Activated CD4-positive, alpha-beta T cell treated with anti-CD3 and anti-CD28 coated beads, Interleukin-2, amount 10 ng/mL, durations not matched to agents 24 days and 14 days (primary cell): ENCODE measurements at regions of chr1 and their contacts with region 1.

Region 1: DNA sequence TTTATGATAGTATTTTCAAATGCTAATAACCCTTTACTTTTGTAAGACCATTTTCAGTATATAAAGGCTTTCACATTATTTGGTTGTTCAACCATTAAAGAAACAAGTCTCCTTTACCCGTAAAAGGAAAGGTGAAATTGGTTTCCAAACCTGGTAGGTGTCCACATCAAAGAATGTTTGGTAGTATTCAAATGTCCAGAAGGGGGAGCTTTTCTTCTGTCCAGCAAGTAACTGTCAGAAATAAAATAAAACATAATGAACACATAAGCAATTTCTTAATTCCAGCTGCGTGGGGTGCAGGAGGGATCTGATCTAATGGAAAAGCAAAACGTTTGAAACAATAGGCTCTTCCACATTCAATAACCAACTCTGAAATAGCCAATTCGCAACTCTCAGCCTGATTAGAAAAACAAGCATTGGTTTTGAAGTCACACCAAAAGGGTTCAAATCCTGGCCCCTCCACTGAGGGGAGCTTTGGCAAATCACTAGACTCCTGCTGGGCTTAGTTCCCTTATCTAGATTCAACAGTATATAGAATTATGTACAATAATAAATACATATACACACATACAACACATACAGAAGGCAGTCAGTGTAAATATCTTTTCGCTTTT is 11.0 kb downstream of the YIPF1 start:
- DNase-seq: peak; percentile 62
- H3K4me3 Mint-ChIP-seq: no peak overlapping the region
- H3K27ac Mint-ChIP-seq: no peak overlapping the region
- H3K4me1 Mint-ChIP-seq: peaks cover 3% of the 10 kb centered on the region
- H3K27me3 Mint-ChIP-seq: no peaks in the 10 kb centered on the region

Region 2: DNA sequence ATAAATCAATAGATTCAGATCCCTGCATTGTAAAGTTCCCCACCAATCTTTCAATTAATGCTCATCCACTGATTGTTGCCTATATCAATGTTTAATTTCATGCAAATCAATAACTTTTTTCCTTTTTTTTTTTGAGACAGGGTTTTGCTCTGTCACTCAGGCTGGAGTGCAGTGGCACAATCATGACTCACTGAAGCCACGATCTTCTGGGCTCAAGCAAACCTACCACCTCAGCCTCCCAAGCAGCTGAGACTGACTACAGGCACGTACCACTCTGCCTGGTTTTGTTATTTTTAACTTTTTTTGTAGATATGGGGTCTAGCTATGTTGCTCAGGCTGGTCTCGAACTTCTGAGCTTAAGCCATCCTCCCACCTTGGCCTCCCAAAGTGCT is 41.1 kb after region 1 on chr1:
- intact Hi-C with region 1: loop called (anchors 5 kb)
- DNase-seq: no peak
- H3K4me3 Mint-ChIP-seq: no peak overlapping the region
- H3K27ac Mint-ChIP-seq: peak overlapping the region; percentile 84
- H3K4me1 Mint-ChIP-seq: peaks cover 36% of the 10 kb centered on the region
- H3K27me3 Mint-ChIP-seq: no peaks in the 10 kb centered on the region

Region 3: GRCh38 chr1:53959664-53960250 is 81.2 kb after region 1 on chr1:
- intact Hi-C with region 1: loop called (anchors 1 kb)
- DNase-seq: peak; percentile 80
- H3K4me3 Mint-ChIP-seq: no peak overlapping the region
- H3K27ac Mint-ChIP-seq: no peak overlapping the region
- H3K4me1 Mint-ChIP-seq: peaks cover 14% of the 10 kb centered on the region
- H3K27me3 Mint-ChIP-seq: no peaks in the 10 kb centered on the region